Cardiac septum (tissue), 1 donor: ENCODE measurements at regions of chr12 and their contacts with region 1.

Region 1: GRCh38 chr12:2959505-2960389 is 550 bp downstream of the TEAD4 start:
- DNase-seq: peak; percentile 84

Region 2: GRCh38 chr12:2890388-2891239 is 69.1 kb before region 1 on chr12 and contains the start of gene TULP3:
- intact Hi-C with region 1: loop called (anchors 5 kb)
- DNase-seq: peak; percentile 99
- total RNA-seq, gene TULP3: 6.2 TPM

Region 3: GRCh38 chr12:2912216-2912575 is 47.6 kb before region 1 on chr12:
- intact Hi-C with region 1: no loop called
- DNase-seq: no peak

Region 4: GRCh38 chr12:2998789-2999264 is 39.1 kb after region 1 on chr12:
- intact Hi-C with region 1: loop called (anchors 2 kb)
- DNase-seq: peak; percentile 91

Region 5: DNA sequence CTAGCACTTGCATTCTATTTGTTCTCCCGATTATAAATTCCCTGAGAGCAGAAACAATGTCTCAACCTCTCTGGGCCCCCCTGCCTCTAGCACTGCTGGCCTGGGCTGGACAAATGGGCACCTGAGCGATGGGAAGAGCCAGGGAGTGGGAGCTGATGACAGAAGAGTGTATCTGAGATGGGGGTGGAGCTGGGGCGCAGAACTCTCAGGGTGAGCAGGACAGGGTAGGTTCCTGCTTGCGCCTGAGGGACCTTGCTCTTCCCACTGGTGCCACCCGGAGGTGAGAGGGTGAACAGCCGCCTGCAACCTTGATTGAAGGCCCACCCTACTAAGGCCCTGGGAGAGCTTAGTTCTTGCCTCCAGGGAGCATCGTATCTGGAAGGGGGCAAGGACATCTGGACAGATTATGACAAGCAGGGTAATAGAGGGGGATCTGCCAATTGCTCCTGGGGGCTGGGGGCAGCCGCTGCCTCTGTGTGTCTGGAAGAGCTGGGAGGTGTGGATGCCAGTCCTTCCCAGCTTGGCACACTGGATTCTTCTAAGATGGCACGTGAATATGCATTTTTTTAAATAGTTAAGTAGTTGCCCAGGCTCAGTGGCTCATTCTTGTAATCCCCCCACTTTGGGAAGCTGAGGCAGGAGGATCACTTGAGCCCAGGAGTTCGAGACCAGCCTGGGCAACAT is 74.5 kb after region 1 on chr12:
- intact Hi-C with region 1: loop called (anchors 2 kb)
- DNase-seq: no peak